Activated T-helper 1 cell treated with anti-CD3 and anti-CD28 coated beads, Interleukin-12 subunit alpha, Interleukin-12 subunit beta, Interleukin-2, Interleukin-4 antibody, amounts not matched to agents 30 ng/mL and 10 ng/mL and 1 ng/mL, durations not matched to agents 14 hours and 24 hours and 36 hours (primary cell): ENCODE measurements at regions of chr17 and their contacts with region 1.

Region 1: DNA sequence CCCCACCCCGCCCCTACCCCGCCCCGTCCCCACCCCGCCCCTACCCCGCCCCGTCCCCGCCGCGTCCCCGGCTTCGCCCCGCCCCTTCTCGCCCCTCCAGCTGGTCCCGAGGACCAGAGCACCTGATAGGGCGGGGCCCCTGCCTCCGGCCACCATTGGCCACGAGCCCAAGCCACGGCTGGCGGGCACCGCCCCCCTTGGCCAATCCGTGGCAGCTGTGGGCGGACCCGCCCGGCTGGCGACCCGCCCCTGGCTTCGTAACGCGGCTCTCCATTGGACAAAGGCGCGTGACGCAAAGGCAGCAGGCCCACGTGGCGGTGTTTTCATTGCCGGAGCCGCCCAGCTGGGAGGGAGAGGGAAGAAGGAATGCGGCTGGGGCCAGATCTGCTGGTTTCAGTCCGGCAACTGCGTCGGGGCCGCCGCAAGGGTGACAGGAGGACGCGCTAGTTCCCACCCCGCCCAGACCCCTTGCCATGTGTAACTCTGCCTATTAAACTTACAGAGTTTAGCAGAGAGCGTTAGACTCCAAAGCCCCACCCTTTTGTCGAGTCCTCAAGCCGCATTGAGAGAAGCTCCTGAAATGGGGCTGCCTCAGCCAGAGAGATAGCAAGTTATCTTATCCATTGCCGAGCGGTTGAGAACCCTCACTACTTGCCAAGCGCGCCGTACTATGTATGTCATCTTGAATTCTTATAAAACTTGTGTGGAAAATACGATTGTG is 403 bp upstream of the WIPI1 start:
- DNase-seq: peak; percentile 99
- H3K4me3 Mint-ChIP-seq: peak overlapping the region; percentile 78
- H3K27ac Mint-ChIP-seq: peak overlapping the region; percentile 85
- H3K4me1 Mint-ChIP-seq: peaks cover 70% of the 10 kb centered on the region
- H3K27me3 Mint-ChIP-seq: no peaks in the 10 kb centered on the region

Region 2: GRCh38 chr17:68035523-68036303 is 422.0 kb before region 1 on chr17 and contains the start of gene KPNA2:
- intact Hi-C with region 1: loop called (anchors 1 kb)
- DNase-seq: peak; percentile 93
- H3K4me3 Mint-ChIP-seq: peak within 1 kb of the TSS; percentile 96
- H3K27ac Mint-ChIP-seq: peak within 1 kb of the TSS; percentile 97
- H3K4me1 Mint-ChIP-seq: peaks cover 23% of the 10 kb centered on the region
- H3K27me3 Mint-ChIP-seq: no peaks in the 10 kb centered on the region
- total RNA-seq, gene KPNA2: 205 and 224 TPM in 2 replicates

Region 3: DNA sequence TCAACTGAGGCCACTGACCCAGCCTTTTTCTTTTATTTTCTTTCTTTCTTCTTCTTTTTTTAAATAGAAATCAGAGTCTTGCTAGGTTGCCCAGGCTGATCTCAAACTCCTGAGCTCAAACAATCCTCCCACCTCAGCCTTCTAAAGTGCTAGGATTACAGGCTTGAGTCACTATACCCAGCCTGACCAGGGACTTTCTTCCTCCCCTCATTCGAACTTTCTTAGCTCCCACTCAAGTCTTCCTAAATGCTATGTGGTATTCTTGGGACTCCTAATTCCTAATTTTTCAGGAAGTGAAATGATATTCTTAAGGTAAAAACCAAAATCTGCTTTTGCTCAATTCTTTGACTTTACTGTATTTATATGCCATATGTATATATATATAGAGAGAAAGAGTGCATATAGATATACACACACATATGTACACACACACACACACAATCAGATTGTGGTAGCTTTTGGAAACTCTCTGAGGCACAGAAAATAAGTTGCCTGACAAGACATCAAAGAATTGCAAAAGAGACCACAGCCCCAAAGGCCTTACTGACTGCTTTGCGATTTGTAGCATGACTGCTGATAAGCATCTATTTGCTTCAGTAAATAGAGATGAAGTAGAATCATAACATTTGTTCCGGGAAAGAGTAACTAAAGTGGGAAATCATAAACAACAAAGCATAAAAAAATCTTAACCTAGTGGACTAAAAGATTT is 219.4 kb before region 1 on chr17:
- intact Hi-C with region 1: loop called (anchors 2 kb)
- DNase-seq: no peak
- H3K4me3 Mint-ChIP-seq: peak overlapping the region; percentile 82
- H3K27ac Mint-ChIP-seq: peak overlapping the region; percentile 95
- H3K4me1 Mint-ChIP-seq: peaks cover 53% of the 10 kb centered on the region
- H3K27me3 Mint-ChIP-seq: no peaks in the 10 kb centered on the region

Region 4: GRCh38 chr17:68273722-68274121 is 184.0 kb before region 1 on chr17:
- intact Hi-C with region 1: no loop called
- DNase-seq: no peak
- H3K4me3 Mint-ChIP-seq: no peak overlapping the region
- H3K27ac Mint-ChIP-seq: no peak overlapping the region
- H3K4me1 Mint-ChIP-seq: no peaks in the 10 kb centered on the region
- H3K27me3 Mint-ChIP-seq: no peaks in the 10 kb centered on the region

Region 5: DNA sequence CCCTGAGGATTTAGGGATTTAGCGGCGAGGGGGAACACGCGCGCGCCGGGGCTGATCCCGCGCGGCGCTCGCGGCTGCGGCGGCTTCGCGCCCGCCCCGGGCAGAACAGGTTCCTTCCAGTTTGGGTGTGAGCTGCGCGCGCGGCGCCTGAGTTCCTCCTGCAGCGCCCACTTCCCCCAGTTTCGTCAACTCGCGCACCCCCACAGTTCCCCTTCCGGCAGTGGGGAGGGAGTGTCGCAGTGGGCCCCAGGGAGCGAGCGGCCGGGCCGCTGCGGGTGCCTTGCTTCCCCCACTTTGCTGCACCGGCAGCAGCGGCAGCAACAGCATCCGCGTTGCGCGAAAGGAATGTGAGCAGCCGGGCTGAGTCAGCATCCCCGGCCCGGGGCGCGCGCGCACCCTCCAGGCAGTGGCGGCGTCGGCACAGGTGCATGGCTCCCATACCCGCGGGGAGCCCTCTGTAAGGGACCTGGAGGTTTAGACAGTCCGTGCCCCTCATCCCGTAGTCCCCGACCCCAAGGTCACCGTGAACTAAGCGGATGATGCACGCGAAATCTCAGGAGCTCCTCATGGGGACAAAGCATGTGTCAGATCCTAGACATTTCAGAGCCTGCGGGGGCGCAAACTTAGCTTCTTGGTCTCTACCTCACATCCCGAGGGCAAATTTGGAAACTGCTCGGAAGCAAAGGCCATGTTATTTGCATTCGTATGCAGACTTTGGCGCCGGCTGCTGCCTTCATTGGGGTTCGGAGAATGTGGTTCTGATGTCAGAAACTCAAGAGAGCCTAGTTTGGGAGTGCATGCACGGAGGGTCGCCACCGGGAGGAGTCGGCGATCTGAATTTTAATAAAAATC is 165.6 kb before region 1 on chr17:
- intact Hi-C with region 1: loop called (anchors 2 kb)
- DNase-seq: peak; percentile 90
- H3K4me3 Mint-ChIP-seq: peak overlapping the region; percentile 83
- H3K27ac Mint-ChIP-seq: peak overlapping the region; percentile 84
- H3K4me1 Mint-ChIP-seq: peaks cover 67% of the 10 kb centered on the region
- H3K27me3 Mint-ChIP-seq: peaks cover 8% of the 10 kb centered on the region

Region 6: DNA sequence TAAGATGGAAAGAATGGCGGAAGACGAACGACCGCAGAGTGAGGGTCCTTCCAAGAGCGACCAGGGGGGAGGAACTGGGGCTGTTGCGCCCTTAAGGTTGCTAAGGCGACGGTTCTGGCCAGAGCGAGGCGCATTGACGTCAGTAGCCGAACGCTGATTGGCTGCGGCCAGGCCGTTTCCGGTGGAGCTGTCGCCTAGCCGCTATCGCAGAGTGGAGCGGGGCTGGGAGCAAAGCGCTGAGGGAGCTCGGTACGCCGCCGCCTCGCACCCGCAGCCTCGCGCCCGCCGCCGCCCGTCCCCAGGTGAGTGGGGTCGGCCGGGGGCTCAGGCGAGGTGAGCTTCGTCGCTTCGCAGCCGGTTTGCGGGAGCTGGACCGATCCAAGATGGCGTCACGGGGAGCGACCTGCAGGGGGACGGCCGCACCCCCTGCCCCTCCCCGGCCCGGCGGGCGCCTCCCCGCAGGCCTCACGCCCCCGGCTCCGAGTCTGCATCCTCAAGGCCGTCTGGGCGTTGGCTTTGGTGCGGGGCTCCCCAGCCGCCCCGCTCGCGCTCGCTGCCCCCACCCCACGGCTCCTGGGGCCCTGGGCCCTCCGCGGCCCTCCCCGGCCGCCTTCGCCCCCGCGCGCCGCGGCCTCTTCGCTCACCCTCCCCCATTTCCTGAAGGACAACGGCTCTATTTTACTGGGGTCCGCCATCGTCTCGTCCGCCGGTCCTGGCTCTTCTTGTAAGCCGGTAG is 54.7 kb after region 1 on chr17 and contains the start of gene PRKAR1A:
- intact Hi-C with region 1: loop called (anchors 1 kb)
- DNase-seq: peak; percentile 91
- H3K4me3 Mint-ChIP-seq: peak within 1 kb of the TSS; percentile 97
- H3K27ac Mint-ChIP-seq: peak within 1 kb of the TSS; percentile 99
- H3K4me1 Mint-ChIP-seq: peaks cover 59% of the 10 kb centered on the region
- H3K27me3 Mint-ChIP-seq: no peaks in the 10 kb centered on the region
- total RNA-seq, gene PRKAR1A: 209 and 214 TPM in 2 replicates